PC-3 (cell line): ENCODE measurements at regions of chr11 and their contacts with region 1.

Region 1: DNA sequence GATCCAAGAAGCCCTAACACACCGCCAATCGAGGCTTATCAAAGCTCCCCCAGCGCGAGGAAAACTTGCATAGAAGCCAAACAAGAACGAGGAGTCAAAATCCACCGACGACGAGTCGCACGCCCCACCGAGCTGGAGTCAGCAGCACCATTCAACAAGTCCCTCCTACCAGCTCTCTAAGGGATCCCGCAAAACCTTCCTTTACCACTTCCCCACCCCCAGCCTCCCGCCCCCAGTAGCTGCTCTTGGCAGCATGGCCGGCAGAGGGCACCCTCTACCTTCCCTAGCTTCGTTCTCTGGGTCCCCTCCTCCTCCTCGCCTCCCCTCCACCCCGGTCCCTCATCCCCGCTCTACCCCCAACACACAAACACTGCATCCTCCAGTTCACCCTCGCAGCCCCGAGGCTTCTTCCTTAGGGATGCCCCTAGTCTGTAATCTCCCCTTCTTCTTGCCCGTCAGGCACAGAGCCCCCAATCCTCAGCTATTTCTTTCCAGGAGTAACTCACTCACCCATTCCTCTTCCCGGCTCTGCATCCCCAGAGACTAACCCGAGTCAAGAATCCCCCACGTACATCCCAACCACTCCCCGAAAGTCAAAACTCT is 1.3 kb downstream of the BDNF start:
- DNase-seq: peak; percentile 88
- ATAC-seq: peak; percentile 50
- H3K4me3 ChIP-seq: peak overlapping the region; percentile 79
- H3K27ac ChIP-seq: no peak overlapping the region
- H3K4me1 ChIP-seq: peaks cover 31% of the 10 kb centered on the region
- H3K27me3 ChIP-seq: no peaks in the 10 kb centered on the region
- CTCF ChIP-seq: peak; percentile 72

Region 2: DNA sequence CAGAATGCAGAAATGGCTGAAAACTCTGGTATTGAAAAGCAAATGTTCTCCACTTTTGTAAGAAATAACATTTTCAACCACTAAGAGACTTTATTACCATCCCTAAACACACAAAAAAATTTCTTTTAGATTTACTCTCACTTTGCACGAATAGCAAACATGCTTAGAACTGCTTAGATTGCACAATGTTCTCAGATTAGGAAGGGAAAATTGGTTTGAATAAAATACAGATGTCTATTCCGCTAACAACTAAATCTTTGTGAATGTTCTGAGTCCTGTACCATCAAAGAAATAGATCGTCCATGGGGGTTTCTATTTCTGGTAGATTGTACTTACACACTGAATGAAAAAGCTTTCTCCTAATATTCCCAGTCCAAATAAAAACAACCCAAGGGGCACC is 38.8 kb before region 1 on chr11:
- CTCF ChIA-PET with region 1: no interaction called
- POLR2A ChIA-PET with region 1: no interaction called
- intact Hi-C with region 1: no loop called
- DNase-seq: no peak
- ATAC-seq: no peak
- H3K4me3 ChIP-seq: no peak overlapping the region
- H3K27ac ChIP-seq: no peak overlapping the region
- H3K4me1 ChIP-seq: peaks cover 4% of the 10 kb centered on the region; the same call in 1 of the 2 replicates
- H3K27me3 ChIP-seq: no peaks in the 10 kb centered on the region
- CTCF ChIP-seq: no peak

Region 3: GRCh38 chr11:27770576-27770975 is 71.6 kb after region 1 on chr11:
- CTCF ChIA-PET with region 1: interaction called, 12 read pairs
- POLR2A ChIA-PET with region 1: interaction called, 3 read pairs
- intact Hi-C with region 1: no loop called
- DNase-seq: peak; percentile 89
- ATAC-seq: peak; percentile 97
- H3K4me3 ChIP-seq: no peak overlapping the region
- H3K27ac ChIP-seq: peak overlapping the region; percentile 29
- H3K4me1 ChIP-seq: peaks cover 20% of the 10 kb centered on the region
- H3K27me3 ChIP-seq: no peaks in the 10 kb centered on the region
- CTCF ChIP-seq: no peak

Region 4: DNA sequence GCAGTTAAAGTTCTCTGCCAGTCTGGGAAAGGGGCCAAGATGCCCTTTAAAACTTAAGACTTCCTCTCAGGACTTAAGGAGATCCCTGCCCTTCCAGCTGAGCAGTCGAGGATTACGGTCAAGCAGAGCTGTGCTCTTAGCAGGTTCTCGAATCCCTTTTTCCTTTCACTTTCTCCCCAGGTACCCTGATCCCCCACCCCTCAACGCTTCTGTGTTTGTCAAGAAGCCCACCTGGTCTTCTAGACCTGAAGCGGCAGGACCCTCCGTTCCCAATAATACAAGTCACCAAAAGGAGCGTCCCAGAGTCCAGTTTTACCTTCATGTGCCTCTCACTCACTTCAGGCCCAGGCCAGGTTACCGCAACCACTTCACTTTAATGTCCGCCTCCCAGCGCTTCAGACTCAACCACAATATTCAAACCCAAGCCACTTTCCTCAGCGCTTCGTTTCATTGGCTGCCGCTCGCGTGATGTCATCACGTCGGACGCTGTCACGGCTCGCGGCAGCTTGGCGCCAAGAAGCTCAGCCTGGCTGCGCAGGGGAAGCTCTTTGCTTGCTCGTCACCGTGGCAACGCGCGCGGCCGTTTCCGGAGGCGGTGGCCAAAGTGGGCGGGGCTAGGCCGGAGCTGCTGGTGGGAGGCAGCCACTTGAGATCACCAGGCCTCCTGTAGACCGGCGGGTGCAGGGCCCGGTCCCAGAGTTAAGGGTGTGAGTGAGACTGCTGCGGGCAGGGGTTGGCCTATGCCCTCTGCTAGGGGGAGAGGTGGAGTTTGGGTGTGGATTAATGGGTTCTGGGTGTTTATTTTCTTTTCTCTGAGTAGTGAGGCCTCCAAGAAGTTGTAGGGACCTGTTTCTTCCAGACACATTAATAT is 409.0 kb after region 1 on chr11 and contains the starts of genes KIF18A and METTL15:
- CTCF ChIA-PET with region 1: no interaction called
- POLR2A ChIA-PET with region 1: interaction called, 5 read pairs
- intact Hi-C with region 1: loop called (anchors 2 kb)
- DNase-seq: peak; percentile 99
- ATAC-seq: peak; percentile 82
- H3K4me3 ChIP-seq: peak within 1 kb of the TSS; percentile 75
- H3K27ac ChIP-seq: peak within 1 kb of the TSS; percentile 64
- H3K4me1 ChIP-seq: peaks cover 62% of the 10 kb centered on the region
- H3K27me3 ChIP-seq: no peaks in the 10 kb centered on the region
- CTCF ChIP-seq: no peak
- total RNA-seq, gene KIF18A: 11.6 and 15.3 TPM in 2 replicates
- total RNA-seq, gene METTL15: 5.8 and 12.4 TPM in 2 replicates

Region 5: GRCh38 chr11:28697920-28698827 is 999.2 kb after region 1 on chr11:
- CTCF ChIA-PET with region 1: interaction called, 3 read pairs
- POLR2A ChIA-PET with region 1: interaction called, 3 read pairs
- intact Hi-C with region 1: loop called (anchors 2 kb)
- DNase-seq: peak; percentile 76
- ATAC-seq: no peak
- H3K4me3 ChIP-seq: no peak overlapping the region
- H3K27ac ChIP-seq: no peak overlapping the region
- H3K4me1 ChIP-seq: peaks cover 24% of the 10 kb centered on the region
- H3K27me3 ChIP-seq: no peaks in the 10 kb centered on the region
- CTCF ChIP-seq: peak; percentile 90

Region 6: GRCh38 chr11:29159552-29160465 is 1460.8 kb after region 1 on chr11:
- CTCF ChIA-PET with region 1: interaction called, 13 read pairs
- POLR2A ChIA-PET with region 1: interaction called, 12 read pairs
- intact Hi-C with region 1: loop called (anchors 1 kb)
- DNase-seq: peak; percentile 84
- ATAC-seq: peak; percentile 93
- H3K4me3 ChIP-seq: no peak overlapping the region
- H3K27ac ChIP-seq: no peak overlapping the region
- H3K4me1 ChIP-seq: peaks cover 7% of the 10 kb centered on the region; the same call in 1 of the 2 replicates
- H3K27me3 ChIP-seq: no peaks in the 10 kb centered on the region
- CTCF ChIP-seq: peak; percentile 88

Region 7: GRCh38 chr11:29328961-29329441 is 1630.0 kb after region 1 on chr11:
- CTCF ChIA-PET with region 1: interaction called, 7 read pairs
- POLR2A ChIA-PET with region 1: no interaction called
- intact Hi-C with region 1: loop called (anchors 1 kb)
- DNase-seq: peak; percentile 77
- ATAC-seq: peak; percentile 88
- H3K4me3 ChIP-seq: no peak overlapping the region
- H3K27ac ChIP-seq: no peak overlapping the region
- H3K4me1 ChIP-seq: peaks cover 27% of the 10 kb centered on the region
- H3K27me3 ChIP-seq: no peaks in the 10 kb centered on the region
- CTCF ChIP-seq: peak; percentile 89